Mammary epithelial cell (primary cell): ENCODE measurements at regions of chr19 and their contacts with region 1.

Region 1: DNA sequence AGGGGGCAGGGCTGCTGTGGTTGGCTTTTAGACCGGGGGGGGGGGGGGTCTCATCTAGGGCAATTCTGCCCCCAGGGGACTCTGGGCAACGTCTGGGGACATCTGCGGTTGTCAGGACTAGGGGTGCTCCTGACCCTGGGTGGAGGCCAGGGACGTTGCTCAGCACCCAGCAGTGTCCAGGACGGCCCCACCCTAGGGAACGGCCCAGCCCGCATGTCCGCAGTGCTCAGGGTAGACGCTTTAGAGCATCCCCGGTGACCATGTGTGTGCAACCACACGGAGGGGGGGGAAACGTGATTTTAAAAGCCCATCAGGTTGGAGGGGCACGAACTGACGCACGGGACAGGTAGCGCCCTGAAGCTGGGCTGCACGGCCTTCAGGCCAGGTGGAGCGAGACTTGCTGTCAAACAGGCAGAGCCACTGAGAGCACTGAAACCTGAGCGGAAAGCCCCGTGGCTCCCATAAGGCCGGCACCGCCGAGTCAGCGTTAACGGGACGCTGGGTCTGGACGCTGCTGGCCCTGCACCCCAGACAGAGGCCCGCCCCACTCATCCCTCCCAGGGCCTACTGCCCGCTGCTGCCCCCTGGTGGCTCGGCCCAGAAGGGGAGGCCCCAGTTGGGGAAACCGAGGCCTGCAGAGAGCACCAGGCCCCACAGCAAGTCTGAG is 8.3 kb downstream of the CACTIN start:
- DNase-seq: no peak
- H3K4me3 ChIP-seq: no peak overlapping the region
- H3K27ac ChIP-seq: no peak overlapping the region
- H3K4me1 ChIP-seq: no peaks in the 10 kb centered on the region
- H3K27me3 ChIP-seq: no peaks in the 10 kb centered on the region
- CTCF ChIP-seq: peak; percentile 70 to 91

Region 2: DNA sequence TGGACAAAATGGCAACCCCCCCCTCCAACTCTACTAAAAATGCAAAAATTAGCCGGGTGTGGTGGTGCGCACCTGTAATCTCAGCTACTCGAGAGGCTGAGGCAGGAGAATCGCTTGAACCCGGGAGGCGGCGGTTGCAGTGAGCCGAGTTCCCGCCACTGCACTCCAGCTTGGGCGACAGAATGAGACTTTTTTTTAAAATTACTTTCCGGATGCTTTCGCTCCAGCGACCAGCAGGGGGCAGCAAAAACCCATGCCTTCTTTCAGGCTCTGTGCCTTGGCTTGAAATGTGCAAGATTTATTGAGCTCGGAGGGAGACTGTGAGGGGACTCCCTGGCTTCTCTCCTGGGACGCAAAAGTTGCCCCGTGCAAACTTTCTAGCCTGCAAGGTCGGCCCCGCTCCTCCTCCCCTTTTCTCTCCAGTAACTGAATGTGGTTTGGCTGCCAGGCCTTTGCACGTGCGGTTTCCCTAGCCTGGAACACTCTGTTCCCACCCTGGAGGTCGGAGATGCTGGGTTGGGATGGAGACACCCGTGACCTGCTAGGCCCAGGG is 313.3 kb before region 1 on chr19:
- CTCF ChIA-PET with region 1: no interaction called
- dilution Hi-C with region 1: loop called (anchors 5 kb)
- in situ Hi-C with region 1: no loop called
- intact Hi-C with region 1: loop called (anchors 10 kb)
- DNase-seq: peak; percentile 41
- H3K4me3 ChIP-seq: no peak overlapping the region
- H3K27ac ChIP-seq: no peak overlapping the region
- H3K4me1 ChIP-seq: no peaks in the 10 kb centered on the region
- H3K27me3 ChIP-seq: no peaks in the 10 kb centered on the region
- CTCF ChIP-seq: peak; percentile 78 to 85

Region 3: DNA sequence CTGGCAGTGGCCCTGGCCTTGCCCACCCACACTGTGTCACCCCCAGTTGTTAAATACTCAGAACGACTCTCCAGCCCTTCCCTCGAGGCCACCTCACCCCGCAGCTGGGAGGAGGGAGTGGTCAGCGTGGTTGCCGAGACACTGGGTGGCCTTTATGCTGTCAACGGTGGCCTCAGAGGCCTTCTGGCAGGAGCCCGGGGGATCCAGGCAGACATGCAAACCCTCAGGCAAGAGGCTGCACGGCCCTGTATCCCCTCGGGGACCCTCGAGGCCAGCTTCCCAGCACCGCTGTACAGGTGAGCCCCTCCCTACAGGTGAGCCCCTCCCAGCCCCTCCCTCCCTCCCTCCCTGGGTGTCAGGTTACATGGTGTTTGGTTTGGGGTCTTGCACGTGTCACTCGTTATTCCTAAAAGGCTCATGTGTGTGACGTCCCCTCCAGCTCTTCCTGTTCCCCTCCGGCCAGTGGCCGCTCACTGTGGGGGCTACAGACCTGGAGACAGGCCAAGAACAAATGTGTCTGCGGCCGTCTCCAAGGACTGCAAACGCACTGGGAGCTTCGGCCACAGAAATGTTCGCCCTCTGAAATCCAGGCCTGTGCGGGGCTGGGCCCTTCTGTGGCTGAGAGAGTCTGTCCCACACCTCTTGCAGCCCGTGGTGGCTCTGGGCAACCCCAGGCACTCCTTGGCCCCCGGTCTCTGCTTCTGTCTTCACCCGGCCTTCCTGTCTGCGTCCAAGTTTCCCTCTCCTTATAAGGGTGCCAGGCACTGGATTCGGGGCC is 79.1 kb before region 1 on chr19 and contains the start of gene TEKTIP1:
- CTCF ChIA-PET with region 1: no interaction called
- dilution Hi-C with region 1: loop called (anchors 5 kb)
- in situ Hi-C with region 1: no loop called
- intact Hi-C with region 1: no loop called
- DNase-seq: no peak
- H3K4me3 ChIP-seq: no peak within 1 kb of the TSS
- H3K27ac ChIP-seq: no peak within 1 kb of the TSS
- H3K4me1 ChIP-seq: peaks cover 7% of the 10 kb centered on the region
- H3K27me3 ChIP-seq: no peaks in the 10 kb centered on the region
- CTCF ChIP-seq: no peak
- total RNA-seq, gene TEKTIP1: 1.9 TPM in 1 of 2 donors, not detected in the other

Region 4: DNA sequence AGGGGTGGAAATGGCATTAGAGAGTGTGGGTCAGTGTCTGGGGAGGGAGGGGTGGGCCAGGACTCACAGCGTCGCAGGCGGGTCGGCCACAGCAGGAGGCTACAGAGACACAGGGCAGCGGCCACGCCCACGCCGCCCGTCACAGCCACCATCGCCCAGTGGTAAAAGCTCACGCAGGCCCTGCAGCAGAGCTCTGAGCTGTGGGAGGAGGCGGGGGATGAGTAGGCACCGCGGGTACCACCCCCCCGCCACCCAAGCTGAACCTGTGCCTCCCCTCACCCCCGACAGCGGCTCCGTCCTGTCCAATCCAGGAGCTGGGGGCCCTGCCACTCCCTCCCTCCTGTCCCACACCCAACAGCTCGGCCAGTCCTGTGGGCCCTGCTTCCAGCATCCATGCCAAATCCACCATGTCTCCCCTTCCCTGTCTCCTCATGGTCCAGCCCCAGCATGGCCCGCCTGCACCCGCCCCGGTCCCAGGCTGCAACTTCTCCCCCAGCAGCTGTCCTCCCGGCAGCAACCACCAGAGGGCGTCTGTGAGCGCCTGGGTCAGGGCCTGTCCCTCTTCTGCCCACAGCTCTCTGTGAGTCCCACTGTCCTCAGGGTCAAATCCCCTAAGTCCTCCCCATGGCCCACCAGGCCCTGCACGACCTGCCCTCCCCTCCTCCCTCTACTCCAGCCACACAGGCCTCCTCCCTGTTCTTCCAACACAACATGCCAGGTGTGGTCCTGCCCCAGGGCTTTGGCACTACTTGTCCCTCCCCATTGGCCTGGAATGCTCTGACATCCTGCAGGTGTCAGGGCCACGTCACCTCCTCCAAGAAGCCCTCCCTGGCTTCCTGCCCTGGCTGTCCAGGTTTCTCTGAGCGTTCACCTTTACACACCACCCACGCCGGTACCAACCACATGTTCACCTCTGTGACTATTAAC is 73.3 kb before region 1 on chr19:
- CTCF ChIA-PET with region 1: no interaction called
- dilution Hi-C with region 1: no loop called
- in situ Hi-C with region 1: no loop called
- intact Hi-C with region 1: loop called (anchors 1 kb)
- DNase-seq: peak; percentile 83
- H3K4me3 ChIP-seq: no peak overlapping the region
- H3K27ac ChIP-seq: no peak overlapping the region
- H3K4me1 ChIP-seq: peaks cover 15% of the 10 kb centered on the region
- H3K27me3 ChIP-seq: no peaks in the 10 kb centered on the region
- CTCF ChIP-seq: peak; percentile 94

Region 5: DNA sequence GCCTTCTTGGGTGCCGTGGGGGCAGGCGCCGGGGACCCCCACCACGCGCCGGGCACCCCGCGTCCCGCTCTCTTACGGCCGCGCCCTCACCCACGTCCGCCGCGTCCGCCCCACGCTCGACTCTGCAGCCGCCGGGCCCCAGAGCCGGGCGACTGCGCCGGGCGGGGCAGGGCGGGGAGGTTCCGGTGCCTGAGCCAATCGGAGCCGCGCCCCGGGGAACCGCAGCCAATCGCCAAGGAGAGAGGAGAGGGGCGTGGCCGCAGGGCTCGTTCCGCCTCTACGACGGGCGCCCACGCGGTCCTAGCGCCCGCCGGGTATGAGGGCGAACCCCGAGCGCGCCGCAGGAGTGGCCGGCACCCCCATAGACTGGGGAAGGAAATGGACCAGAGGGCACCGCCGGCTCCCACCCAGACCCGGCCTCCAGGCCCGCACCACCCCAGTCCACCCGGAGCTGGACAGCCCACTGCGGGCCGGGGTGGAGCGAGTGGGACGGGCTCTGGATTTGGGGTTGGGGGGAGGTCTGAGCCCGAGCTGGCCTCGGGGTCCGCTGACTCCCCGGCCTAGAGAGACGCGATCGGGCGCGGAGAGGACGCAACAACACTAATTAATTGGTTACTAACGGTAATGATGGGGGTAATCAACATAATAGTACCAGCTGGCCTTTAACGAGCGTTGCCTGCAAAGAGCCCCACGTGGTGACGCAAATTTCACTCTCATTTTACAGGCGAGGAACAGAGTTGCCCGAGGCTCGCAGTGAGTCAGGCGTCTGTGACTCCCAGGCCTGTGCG is 60.6 kb before region 1 on chr19 and contains the start of gene MFSD12:
- CTCF ChIA-PET with region 1: no interaction called
- dilution Hi-C with region 1: no loop called
- in situ Hi-C with region 1: no loop called
- intact Hi-C with region 1: loop called (anchors 2 kb)
- DNase-seq: peak; percentile 90
- H3K4me3 ChIP-seq: peak within 1 kb of the TSS; percentile 82 to 93 (median 83)
- H3K27ac ChIP-seq: peak within 1 kb of the TSS; percentile 57
- H3K4me1 ChIP-seq: peaks cover 23% of the 10 kb centered on the region
- H3K27me3 ChIP-seq: no peaks in the 10 kb centered on the region
- CTCF ChIP-seq: no peak
- total RNA-seq, gene MFSD12: 113 to 267 TPM

Region 6: GRCh38 chr19:3572132-3572854 is 46.0 kb before region 1 on chr19:
- CTCF ChIA-PET with region 1: no interaction called
- dilution Hi-C with region 1: loop called (anchors 5 kb)
- in situ Hi-C with region 1: no loop called
- intact Hi-C with region 1: no loop called
- DNase-seq: peak; percentile 100
- H3K4me3 ChIP-seq: peak overlapping the region; percentile 35 to 55 (median 50)
- H3K27ac ChIP-seq: peak overlapping the region; percentile 67
- H3K4me1 ChIP-seq: peaks cover 25% of the 10 kb centered on the region
- H3K27me3 ChIP-seq: no peaks in the 10 kb centered on the region
- CTCF ChIP-seq: no peak

Region 7: DNA sequence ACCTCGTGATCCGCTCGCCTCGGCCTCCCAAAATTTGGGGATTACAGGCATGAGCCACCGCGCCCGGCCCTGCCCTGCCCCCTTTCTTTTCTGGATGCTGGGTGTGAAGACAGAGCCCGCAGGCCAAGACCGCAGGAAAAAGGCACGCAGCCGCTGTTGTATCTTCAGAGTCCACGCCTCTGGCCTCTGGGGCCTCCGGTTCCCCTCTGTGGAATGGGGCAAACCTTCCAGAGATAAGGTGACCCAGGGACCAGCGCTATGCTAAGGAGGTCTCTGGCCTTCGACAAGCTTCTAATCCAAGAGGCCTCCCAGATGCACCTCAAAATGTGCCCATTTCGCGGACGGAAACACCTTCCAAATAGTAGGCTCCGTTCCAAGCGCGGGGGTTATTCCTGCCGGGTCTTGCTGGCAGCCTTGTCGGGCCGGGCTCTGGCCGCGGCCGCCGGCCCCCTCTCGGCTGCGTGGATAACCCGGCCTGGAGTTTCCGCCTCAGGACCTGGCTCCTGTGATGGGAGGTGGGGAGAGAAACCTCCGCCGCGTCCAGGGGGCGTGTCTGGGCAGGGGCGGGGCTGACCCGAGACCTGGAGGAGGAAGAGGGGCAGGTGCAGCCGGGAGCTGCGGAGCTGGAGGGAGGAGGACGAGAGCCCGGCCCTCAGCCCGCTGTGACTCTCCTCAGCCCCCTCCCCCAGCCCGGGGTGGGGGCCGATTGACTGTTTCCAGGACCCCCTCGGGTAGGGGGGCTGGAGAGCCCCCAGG is 103.0 kb after region 1 on chr19:
- CTCF ChIA-PET with region 1: no interaction called
- dilution Hi-C with region 1: loop called (anchors 5 kb)
- in situ Hi-C with region 1: no loop called
- intact Hi-C with region 1: no loop called
- DNase-seq: peak; percentile 83
- H3K4me3 ChIP-seq: no peak overlapping the region
- H3K27ac ChIP-seq: no peak overlapping the region
- H3K4me1 ChIP-seq: peaks cover 5% of the 10 kb centered on the region
- H3K27me3 ChIP-seq: no peaks in the 10 kb centered on the region
- CTCF ChIP-seq: no peak

Region 8: GRCh38 chr19:3879656-3880055 is 261.4 kb after region 1 on chr19:
- CTCF ChIA-PET with region 1: no interaction called
- dilution Hi-C with region 1: no loop called
- in situ Hi-C with region 1: no loop called
- intact Hi-C with region 1: no loop called
- DNase-seq: no peak
- H3K4me3 ChIP-seq: no peak overlapping the region
- H3K27ac ChIP-seq: no peak overlapping the region
- H3K4me1 ChIP-seq: no peaks in the 10 kb centered on the region
- H3K27me3 ChIP-seq: peaks cover 23% of the 10 kb centered on the region
- CTCF ChIP-seq: peak in 1 of 2 donors; percentile 4